PC-9 (cell line): ENCODE measurements at regions of chr1 and their contacts with region 1.

Region 1: DNA sequence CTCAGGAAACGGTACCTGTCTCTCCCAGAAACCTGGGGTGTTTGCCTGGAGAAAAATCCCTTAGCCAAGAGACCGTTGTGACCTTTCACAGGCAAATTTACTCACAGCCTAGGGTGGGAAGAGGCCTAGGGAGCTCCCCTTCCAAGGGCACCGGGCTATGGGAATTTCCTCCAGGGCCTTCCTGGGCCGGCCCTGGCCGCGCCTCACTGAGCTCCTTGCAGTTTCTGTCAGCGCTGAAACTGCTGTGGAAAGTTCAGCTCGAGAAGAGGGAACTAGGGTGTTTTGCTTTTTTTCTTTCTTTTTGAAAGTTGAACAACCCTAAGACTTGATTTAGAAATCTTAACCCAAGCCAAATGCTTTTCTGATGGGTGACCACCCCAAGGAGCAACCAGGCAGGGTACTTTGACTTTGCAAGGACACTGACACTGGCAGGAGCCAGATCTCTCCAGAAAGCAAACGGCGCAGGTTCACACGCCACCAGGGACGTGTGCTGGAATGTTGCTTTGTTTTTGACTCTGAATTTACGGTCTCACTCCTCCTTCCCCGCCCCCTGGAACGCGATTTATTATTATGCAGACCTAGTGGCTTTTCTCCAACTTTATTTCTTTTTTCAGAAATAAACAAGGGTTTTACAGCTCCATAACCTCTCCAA is 229.6 kb upstream of the JUN start:
- DNase-seq: no peak
- H3K4me3 ChIP-seq: no peak overlapping the region
- H3K27ac ChIP-seq: no peak overlapping the region
- H3K4me1 ChIP-seq: peaks cover 9% of the 10 kb centered on the region; the same call in 1 of the 2 replicates
- H3K27me3 ChIP-seq: no peaks in the 10 kb centered on the region
- CTCF ChIP-seq: no peak

Region 2: GRCh38 chr1:58929671-58930325 is 83.6 kb before region 1 on chr1:
- CTCF ChIA-PET with region 1: no interaction called
- POLR2A ChIA-PET with region 1: no interaction called
- intact Hi-C with region 1: no loop called
- DNase-seq: peak; percentile 71 to 87
- H3K4me3 ChIP-seq: peak overlapping the region; percentile 42; the same call in 1 of the 2 replicates
- H3K27ac ChIP-seq: peak overlapping the region; percentile 78
- H3K4me1 ChIP-seq: peaks cover 78% of the 10 kb centered on the region
- H3K27me3 ChIP-seq: no peaks in the 10 kb centered on the region
- CTCF ChIP-seq: no peak

Region 3: DNA sequence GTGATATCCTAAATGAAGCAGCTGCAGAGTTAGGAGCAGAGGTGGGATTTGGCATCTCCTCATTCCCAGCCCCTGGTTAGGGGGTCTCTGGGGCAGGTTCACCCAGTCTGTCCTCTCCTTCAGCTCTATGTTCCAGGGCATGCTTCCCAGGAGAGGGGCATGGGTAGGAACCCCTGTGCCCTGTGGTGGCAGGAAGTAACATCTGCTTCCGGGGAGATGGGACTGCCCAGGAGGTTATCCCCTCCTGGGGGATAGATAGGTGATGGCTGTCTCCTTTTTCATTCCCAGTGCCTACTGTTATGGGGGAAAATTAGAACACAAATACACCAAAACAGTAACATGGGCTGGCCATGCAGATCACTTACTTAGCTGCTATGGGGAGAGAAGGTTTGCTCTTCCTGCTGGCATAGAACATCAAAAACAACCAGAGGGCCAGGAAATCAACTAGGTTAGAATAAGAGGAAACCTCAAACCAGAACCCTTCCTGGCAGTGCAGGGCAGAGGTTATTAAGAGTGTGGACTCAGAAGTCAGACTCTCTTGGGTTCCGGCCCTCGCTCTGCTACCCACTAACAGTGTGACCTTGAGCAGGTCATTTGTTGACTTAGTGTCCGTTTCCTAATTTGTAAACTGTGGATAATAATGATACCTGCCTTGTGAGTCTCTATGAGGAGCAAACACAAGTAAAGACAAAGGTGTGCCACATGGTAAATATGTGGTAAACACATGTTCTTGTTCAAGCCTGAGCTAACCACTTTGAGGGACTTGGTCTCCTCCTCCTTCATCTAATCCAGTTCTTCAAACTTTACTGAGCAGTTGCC is 71.7 kb before region 1 on chr1:
- CTCF ChIA-PET with region 1: no interaction called
- POLR2A ChIA-PET with region 1: no interaction called
- intact Hi-C with region 1: no loop called
- DNase-seq: no peak
- H3K4me3 ChIP-seq: no peak overlapping the region
- H3K27ac ChIP-seq: no peak overlapping the region
- H3K4me1 ChIP-seq: no peaks in the 10 kb centered on the region
- H3K27me3 ChIP-seq: no peaks in the 10 kb centered on the region
- CTCF ChIP-seq: no peak

Region 4: GRCh38 chr1:59475737-59476136 is 462.3 kb after region 1 on chr1:
- CTCF ChIA-PET with region 1: no interaction called
- POLR2A ChIA-PET with region 1: interaction called, 14 read pairs
- intact Hi-C with region 1: no loop called
- DNase-seq: no peak
- H3K4me3 ChIP-seq: no peak overlapping the region
- H3K27ac ChIP-seq: no peak overlapping the region
- H3K4me1 ChIP-seq: no peaks in the 10 kb centered on the region
- H3K27me3 ChIP-seq: no peaks in the 10 kb centered on the region
- CTCF ChIP-seq: no peak